ENCODE measurements at regions of chr5 and their contacts with region 1.

Region 1: DNA sequence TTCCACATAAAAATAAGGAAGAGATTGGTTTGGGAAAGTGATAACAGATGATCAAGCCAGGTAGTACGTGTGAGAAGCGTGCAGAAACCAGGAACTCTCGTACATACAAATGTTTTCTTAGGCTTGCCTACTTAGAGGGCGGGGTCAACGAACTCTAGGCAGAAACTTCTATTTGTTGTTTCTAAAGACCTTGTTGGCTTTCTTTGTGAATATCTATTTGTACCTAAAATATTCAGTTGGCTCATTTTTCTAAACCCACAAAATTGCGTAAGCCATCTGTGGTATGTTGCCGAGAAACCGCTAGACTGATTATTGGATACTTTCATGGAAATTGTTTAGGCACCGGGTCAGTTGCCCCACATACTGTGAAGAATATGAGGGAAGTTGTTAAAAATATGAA is 458.5 kb downstream of the MAT2B start:
- DNase-seq: no peak
- ATAC-seq: no peak
- H3K4me3 ChIP-seq: no peak overlapping the region
- H3K27ac ChIP-seq: no peak overlapping the region
- H3K4me1 ChIP-seq: 0 out of 2 replicates have a peak, but pooled peaks cover 2% of the 10 kb centered on the region
- H3K27me3 ChIP-seq: no peaks in the 10 kb centered on the region
- CTCF ChIP-seq: no peak
- POLR2A ChIP-seq: no peak
- RAD21 ChIP-seq: no peak

Region 2: DNA sequence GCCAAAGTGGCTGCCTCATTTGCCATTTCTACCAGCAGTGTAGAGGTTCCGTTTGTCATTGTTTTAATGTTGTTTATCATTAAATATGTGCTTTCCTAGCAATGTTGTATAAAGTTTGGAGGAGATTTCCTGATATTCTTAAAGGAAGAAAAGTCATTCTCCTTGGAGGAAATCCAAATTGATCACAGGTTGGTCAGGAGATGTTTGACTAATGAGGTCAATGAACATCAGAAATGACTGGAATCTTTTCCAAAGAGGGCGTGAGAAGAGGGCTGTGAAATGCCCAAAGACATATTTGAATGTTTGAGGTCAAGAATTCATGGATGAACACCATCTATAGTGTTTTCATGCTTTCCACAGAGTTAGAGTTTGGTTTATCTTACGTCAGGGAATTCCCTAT is 12.8 kb after region 1 on chr5:
- CTCF ChIA-PET with region 1: no interaction called
- POLR2A ChIA-PET with region 1: no interaction called
- dilution Hi-C with region 1: no loop called
- in situ Hi-C with region 1: no loop called
- intact Hi-C with region 1: loop called (anchors 2 kb)
- DNase-seq: peak; percentile 53
- ATAC-seq: no peak
- H3K4me3 ChIP-seq: no peak overlapping the region
- H3K27ac ChIP-seq: no peak overlapping the region
- H3K4me1 ChIP-seq: no peaks in the 10 kb centered on the region
- H3K27me3 ChIP-seq: no peaks in the 10 kb centered on the region
- CTCF ChIP-seq: no peak
- POLR2A ChIP-seq: no peak
- RAD21 ChIP-seq: no peak